BJ (cell line): ENCODE measurements at regions of chr11 and their contacts with region 1.

Region 1: DNA sequence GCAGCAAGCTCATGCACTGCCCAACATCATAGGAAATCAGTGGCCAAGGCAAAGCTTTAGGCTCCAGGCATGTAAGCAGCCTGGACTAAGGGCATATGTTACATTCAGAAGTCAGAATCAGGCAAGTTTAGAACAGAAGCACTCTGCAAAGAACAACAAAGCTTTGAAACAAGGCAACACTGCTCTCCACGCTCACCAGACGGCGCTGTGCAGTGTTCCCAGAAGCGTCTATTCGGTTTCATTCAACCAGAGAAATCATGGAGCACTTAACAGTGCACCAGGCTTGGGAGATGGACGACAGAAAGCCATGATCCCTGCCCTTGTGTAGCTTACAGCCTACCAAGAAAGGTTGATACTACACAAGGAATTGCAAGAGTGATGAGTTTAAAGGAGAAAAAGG is 555.8 kb downstream of the BUD13 start:
- DNase-seq: no peak
- H3K4me3 ChIP-seq: no peak overlapping the region
- H3K27me3 ChIP-seq: no peaks in the 10 kb centered on the region
- CTCF ChIP-seq: peak; percentile 83

Region 2: GRCh38 chr11:116012055-116012454 is 205.0 kb before region 1 on chr11:
- CTCF ChIA-PET with region 1: no interaction called
- POLR2A ChIA-PET with region 1: no interaction called
- DNase-seq: no peak
- H3K4me3 ChIP-seq: no peak overlapping the region
- H3K27me3 ChIP-seq: no peaks in the 10 kb centered on the region
- CTCF ChIP-seq: no peak

Region 3: GRCh38 chr11:116229236-116229970 is 12.4 kb after region 1 on chr11:
- CTCF ChIA-PET with region 1: interaction called, 20 read pairs
- POLR2A ChIA-PET with region 1: no interaction called
- DNase-seq: no peak
- H3K4me3 ChIP-seq: no peak overlapping the region
- H3K27me3 ChIP-seq: no peaks in the 10 kb centered on the region
- CTCF ChIP-seq: no peak